Activated CD4-positive, alpha-beta memory T cell treated with anti-CD3 and anti-CD28 coated beads, Interleukin-2, amount 10 ng/mL, durations not matched to agents 7 days and 5 days (primary cell): ENCODE measurements at regions of chr15 and their contacts with region 1.

Region 1: DNA sequence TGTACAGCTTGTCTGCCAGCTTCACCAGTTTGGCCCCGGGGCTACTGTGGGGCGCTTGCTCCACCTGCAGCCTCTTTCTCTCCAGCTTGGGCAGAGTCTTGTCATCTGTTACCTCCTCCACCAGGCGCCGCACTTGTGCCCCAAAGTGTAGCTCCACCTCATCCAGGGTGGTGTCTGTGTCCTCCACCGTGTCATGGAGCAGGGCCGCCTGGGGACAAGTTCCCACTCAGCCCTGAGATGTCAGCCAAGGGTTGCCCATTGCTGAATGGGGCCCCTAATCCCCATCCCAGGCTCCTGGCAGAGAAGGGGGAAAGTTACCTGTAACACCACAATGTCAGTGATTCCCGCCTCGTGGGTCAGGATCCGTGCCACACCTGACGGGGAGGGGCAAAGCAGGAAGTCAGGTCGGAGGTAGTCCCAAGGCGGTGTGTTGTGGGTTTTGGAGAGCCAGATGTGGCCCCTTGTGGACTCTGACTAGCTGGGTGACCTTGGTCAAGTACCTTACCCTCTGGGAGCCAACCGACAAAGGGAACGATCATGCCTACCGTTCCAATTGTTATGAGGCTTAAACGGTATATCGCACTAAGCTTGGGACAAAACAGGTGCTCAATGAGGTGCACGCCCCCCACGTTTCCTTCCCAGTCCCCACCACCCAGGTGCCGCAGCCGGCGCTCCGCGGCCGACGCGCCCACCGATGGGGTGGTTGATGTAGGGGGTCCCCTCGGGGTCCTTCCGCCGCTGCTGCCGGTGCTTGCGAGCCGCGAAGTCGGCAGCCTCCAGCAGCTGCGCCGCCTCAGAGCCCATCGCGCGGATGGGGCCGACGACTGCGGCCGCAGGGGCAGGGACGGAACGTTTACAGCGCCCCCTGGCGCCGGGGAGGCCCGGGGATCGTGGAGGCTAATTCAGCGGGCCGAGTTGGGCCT is at the start of gene HDDC3:
- DNase-seq: peak; percentile 93
- H3K4me3 Mint-ChIP-seq: peak within 1 kb of the TSS; percentile 99
- H3K27ac Mint-ChIP-seq: peak within 1 kb of the TSS; percentile 99
- H3K4me1 Mint-ChIP-seq: peaks cover 61% of the 10 kb centered on the region
- H3K27me3 Mint-ChIP-seq: no peaks in the 10 kb centered on the region
- total RNA-seq, gene HDDC3: 37.6 to 41.7 TPM

Region 2: DNA sequence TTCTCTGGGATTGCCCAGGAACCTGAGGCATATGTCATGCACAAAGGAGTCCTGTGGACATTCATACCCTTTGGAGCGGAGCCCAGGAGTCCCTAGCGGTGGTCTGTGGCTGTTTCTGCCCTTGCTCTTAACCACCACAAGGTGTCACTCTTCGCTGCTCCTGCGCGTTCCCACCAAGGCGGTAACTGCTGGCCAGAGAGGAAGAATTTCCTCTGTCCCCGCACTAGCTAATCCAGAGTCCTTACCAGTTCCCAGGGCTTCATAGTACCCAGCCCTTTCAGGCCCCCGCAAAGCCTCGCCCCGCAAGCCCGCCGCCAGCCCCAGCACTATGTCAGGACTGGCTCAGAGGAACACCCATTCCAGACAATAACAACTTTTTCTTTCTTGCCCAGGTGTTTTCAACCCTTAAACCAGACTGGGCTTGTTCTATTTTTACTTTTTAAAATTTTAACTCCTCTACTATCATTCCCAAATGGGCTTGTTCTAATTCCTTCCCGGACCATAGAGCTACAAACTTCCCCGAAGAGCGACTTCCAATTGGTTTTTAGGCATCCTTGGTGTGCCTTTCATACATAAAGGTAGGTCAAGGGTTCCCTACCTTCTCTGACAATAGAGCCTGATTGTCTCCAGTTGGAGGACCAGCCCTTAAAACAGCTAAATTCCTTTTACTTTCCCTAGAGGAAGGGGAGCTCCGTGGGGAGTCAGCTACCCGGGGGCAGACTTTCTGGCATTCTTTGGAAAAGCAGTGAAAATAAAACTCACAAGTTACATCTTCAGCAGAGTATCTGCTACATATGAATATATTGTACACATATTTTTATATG is 611.7 kb before region 1 on chr15:
- CTCF ChIA-PET with region 1: interaction called, 13 read pairs
- POLR2A ChIA-PET with region 1: no interaction called
- DNase-seq: peak; percentile 77
- H3K4me3 Mint-ChIP-seq: no peak overlapping the region
- H3K27ac Mint-ChIP-seq: no peak overlapping the region
- H3K4me1 Mint-ChIP-seq: peaks cover 7% of the 10 kb centered on the region
- H3K27me3 Mint-ChIP-seq: no peaks in the 10 kb centered on the region

Region 3: DNA sequence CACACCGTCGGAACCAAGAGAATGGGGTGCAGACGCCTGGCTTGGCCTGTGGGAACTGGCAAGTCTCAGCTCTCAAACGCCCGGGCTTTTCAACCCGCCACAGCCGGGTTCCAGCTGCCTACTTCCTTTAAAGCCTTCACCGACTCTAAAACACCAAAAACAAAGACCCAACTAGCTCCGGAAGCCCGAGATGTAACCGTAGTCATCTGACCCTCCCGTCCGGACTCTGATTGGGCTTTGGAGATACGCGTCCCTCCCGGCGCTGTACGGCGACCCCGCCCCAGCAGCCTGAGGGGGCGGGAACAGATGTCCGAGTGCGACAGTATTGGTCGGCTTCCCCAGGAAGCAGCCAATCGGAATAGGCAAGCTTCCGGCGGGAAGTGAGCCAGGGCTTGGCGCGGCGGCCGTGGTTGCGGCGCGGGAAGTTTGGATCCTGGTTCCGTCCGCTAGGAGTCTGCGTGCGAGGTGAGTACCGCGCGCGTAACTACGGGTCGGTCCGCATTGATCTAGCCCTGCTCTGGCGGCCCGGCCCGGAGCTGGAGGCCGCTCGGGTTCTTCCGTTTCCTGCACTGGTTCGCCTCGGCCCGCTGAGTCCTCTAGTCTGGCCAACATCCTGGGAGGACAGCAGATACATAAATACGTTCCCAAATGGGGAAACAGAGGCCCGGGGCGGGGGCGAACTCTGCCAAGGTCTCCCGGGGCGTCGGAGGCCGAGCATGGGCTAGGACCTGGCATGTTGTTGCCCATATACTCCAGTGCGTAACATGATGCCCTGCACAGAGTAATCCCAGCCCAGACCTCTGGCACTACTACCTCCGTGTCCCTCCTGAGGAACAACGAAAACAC is 214.8 kb before region 1 on chr15 and contains the start of gene BLM:
- CTCF ChIA-PET with region 1: interaction called, 18 read pairs
- POLR2A ChIA-PET with region 1: interaction called, 47 read pairs
- DNase-seq: peak; percentile 97
- H3K4me3 Mint-ChIP-seq: peak within 1 kb of the TSS; percentile 83
- H3K27ac Mint-ChIP-seq: peak within 1 kb of the TSS; percentile 94
- H3K4me1 Mint-ChIP-seq: peaks cover 36% of the 10 kb centered on the region
- H3K27me3 Mint-ChIP-seq: no peaks in the 10 kb centered on the region
- total RNA-seq, gene BLM: 59.4 to 63.7 TPM

Region 4: GRCh38 chr15:90839187-90840071 is 92.6 kb before region 1 on chr15:
- CTCF ChIA-PET with region 1: interaction called, 7 read pairs
- POLR2A ChIA-PET with region 1: interaction called, 19 read pairs
- DNase-seq: no peak
- H3K4me3 Mint-ChIP-seq: peak overlapping the region; percentile 79
- H3K27ac Mint-ChIP-seq: peak overlapping the region; percentile 90
- H3K4me1 Mint-ChIP-seq: peaks cover 83% of the 10 kb centered on the region
- H3K27me3 Mint-ChIP-seq: no peaks in the 10 kb centered on the region

Region 5: DNA sequence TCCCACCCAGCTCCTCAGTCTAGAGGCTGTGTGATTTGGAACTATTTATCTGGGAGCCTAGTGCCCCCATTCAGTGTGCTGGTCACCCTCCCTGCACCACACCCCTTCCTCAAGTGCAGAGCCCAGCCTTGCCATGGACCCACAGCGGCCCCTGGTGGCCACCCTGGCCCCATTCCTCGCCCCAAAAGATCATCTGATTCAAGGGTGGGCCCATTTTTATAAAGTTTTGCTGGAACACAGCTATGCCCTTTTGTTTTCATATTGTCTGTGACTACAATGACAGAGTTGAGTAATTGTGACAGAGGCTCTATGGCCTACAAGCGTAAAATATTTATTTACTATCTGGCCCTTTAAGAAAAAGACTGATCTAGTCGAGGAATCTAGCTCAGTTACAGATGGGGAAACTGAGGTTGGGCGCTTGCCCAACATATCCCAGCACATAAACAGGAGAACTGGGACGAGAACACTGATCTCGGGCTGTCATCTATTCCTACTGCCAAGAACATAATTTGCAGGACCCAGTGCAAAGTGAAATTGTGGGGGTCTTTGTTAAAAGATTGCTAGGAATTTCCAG is 45.9 kb before region 1 on chr15:
- CTCF ChIA-PET with region 1: interaction called, 28 read pairs
- POLR2A ChIA-PET with region 1: interaction called, 15 read pairs
- DNase-seq: peak; percentile 83
- H3K4me3 Mint-ChIP-seq: no peak overlapping the region
- H3K27ac Mint-ChIP-seq: peak overlapping the region; percentile 78
- H3K4me1 Mint-ChIP-seq: peaks cover 57% of the 10 kb centered on the region
- H3K27me3 Mint-ChIP-seq: no peaks in the 10 kb centered on the region

Region 6: DNA sequence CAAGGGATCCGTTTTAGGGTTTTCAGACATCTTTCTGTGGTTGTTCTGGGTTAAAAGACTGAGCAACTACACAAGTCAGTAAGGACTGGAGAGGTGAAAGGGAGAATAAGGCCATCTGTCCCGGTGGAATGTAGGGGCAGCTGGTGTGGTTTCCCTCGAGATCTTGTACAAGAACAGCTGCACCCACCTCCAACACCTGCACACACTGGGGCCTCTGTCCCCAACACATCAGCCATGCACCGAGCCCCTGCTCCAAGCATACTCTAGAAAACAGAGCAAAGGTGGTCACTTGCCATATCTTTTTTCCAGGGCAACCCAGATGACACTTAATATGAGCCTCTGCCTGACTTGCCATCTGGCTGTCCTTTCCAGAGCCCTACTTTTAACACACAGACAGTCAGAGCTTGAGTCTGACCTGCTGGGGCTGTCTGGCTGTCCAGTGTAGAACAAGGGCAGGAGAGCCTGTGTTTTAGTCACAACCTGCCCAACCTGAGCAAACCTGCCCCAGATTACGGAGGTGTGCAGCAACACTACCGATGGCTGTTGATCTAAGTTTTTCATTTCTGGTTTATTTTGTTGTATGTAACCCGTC is 16.7 kb before region 1 on chr15:
- CTCF ChIA-PET with region 1: interaction called, 80 read pairs
- POLR2A ChIA-PET with region 1: interaction called, 35 read pairs
- DNase-seq: no peak
- H3K4me3 Mint-ChIP-seq: no peak overlapping the region
- H3K27ac Mint-ChIP-seq: peak overlapping the region; percentile 21
- H3K4me1 Mint-ChIP-seq: no peaks in the 10 kb centered on the region
- H3K27me3 Mint-ChIP-seq: no peaks in the 10 kb centered on the region

Region 7: DNA sequence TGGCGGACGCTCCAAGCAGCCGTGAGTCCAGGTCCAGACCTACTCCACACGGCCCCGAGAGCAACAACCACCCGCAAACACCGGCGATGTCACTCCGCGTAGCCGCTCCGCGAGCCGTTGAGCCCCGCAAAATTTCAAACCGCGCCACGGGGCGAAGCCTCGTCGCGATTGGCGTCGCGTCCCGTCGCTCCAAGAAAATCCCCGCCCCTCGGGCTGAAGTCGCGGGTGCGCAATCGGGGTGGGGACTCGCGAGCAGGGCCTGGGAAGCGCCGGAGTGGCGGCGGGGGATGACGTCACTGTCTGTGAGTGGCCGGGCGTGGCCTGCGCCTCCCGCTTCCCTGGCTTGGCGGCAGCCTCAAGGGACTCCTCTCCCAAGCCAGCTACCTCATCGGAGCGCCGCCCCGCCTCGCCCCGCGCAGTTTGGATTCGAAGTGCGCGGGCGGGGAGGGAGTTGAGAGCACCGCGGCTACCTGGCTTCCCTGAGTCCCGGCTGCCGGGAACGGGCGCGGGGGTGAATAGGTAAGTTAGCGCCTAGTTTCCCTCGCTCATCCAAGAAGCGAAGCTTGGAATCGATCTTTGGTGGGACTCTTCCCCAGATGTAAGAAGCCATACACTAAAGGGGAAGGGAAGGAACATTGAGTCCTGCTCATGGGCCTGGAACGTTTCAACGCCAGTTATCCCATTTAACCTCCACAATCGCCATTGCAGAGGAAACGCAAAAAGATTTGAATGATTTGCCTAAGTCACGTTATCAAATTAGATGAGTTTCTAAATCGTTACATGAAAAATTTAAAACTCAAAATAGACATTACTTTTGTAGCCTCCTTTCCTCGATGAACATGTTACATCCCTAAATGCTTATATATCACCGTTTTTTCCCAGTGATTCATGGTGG is 62.7 kb after region 1 on chr15 and contains the start of gene PRC1:
- CTCF ChIA-PET with region 1: interaction called, 13 read pairs
- POLR2A ChIA-PET with region 1: interaction called, 8 read pairs
- DNase-seq: peak; percentile 98
- H3K4me3 Mint-ChIP-seq: peak within 1 kb of the TSS; percentile 100
- H3K27ac Mint-ChIP-seq: peak within 1 kb of the TSS; percentile 100
- H3K4me1 Mint-ChIP-seq: peaks cover 40% of the 10 kb centered on the region
- H3K27me3 Mint-ChIP-seq: no peaks in the 10 kb centered on the region
- total RNA-seq, gene PRC1: 158 to 167 TPM